Endothelial cell of umbilical vein (primary cell): ENCODE measurements at regions of chr9 and their contacts with region 1.

Region 1: GRCh38 chr9:95317119-95317892 is at the start of gene FANCC:
- DNase-seq: peak; percentile 89
- H3K4me3 ChIP-seq: peak within 1 kb of the TSS; percentile 76 to 96 (median 88)
- H3K27ac ChIP-seq: peak within 1 kb of the TSS; percentile 98
- H3K4me1 ChIP-seq: peaks cover 14% of the 10 kb centered on the region
- H3K27me3 ChIP-seq: peaks cover 0 to 5% of the 10 kb centered on the region in 2 experiments
- CTCF ChIP-seq: no peak
- POLR2A ChIP-seq: peak; percentile 72
- total RNA-seq, gene FANCC: 13.1 and 14.0 TPM in 2 replicates

Region 2: DNA sequence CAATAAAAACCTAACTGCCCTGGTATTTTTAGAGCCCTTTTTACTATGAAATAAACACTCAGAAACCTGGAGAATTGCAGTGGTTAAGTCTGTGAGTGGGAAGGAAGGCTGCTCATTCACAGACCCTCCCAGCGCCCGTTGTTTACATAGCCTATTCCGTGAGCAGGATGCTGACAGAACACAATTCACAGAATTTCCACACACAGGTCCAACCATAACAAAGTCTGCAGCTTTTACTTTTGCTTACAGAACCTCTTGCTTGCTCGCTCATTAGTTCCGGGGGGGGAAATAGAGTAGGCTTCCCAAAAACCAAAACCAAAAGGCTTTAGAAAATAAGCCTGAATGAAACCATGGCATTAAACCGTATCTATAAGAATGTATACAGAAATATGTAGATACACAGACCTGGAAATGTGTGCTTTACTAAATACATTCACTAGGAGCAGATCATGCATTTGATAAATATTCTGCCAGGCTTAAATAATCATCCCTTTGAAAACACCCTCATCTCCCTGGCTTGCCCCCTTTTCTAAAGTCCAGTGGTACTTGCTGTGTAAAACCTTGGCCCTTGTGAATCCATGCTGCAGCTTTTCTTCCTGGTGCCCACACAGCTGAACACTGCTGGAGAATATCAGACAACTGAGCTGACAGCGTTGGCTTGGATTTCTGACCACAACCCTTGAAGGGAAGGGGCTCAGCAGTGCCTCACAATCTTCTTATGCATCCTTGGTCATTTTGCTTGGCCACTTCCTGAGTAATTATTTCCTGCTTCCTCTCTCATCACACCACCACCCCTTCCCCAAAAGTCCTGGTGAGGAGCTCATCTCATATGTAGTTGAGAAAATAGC is 127.8 kb before region 1 on chr9:
- CTCF ChIA-PET with region 1: no interaction called
- POLR2A ChIA-PET with region 1: no interaction called
- dilution Hi-C with region 1: no loop called
- intact Hi-C with region 1: loop called (anchors 1 kb)
- DNase-seq: peak; percentile 95
- H3K4me3 ChIP-seq: peak overlapping the region in 2 of 3 experiments; percentile 24 to 41
- H3K27ac ChIP-seq: peak overlapping the region; percentile 89
- H3K4me1 ChIP-seq: peaks cover 25% of the 10 kb centered on the region
- H3K27me3 ChIP-seq: no peaks in the 10 kb centered on the region
- CTCF ChIP-seq: no peak
- POLR2A ChIP-seq: no peak

Region 3: DNA sequence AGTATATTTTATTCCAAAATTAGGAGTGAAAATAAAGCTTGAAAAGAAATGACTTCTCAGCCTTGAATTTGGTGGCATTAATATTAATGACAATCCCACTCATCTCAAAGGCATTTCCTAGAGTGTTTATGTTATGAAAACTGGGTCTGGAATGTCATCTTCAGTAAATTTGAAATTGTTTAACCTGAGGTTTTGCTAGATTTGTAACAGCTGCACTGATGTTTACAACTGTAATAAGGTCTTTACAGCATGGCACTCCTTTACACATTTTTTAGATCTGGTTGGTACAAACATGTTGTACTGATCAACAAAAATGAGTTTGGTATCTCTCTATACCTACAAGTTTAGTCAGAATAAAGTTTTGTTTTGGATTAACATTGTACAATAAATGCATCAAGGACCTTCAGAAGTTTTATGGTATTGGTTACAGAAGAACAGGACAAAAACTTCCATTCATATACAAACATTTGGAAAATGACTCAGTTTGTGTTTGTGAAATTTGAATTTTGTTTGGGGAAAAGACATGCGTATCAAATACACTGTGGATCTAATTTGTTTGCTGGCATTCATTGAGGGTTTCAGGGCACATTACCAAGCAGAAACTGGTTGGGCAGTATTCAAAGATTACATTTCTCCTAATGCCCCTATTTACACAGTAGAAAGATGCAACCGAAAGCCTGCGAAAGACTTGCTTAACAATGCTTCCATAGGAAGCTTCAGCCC is 11.4 kb before region 1 on chr9:
- CTCF ChIA-PET with region 1: no interaction called
- POLR2A ChIA-PET with region 1: no interaction called
- dilution Hi-C with region 1: no loop called
- intact Hi-C with region 1: loop called (anchors 1 kb)
- DNase-seq: peak; percentile 35
- H3K4me3 ChIP-seq: no peak overlapping the region
- H3K27ac ChIP-seq: peak overlapping the region; percentile 10
- H3K4me1 ChIP-seq: peaks cover 26% of the 10 kb centered on the region
- H3K27me3 ChIP-seq: no peaks in the 10 kb centered on the region
- CTCF ChIP-seq: no peak
- POLR2A ChIP-seq: no peak

Region 4: DNA sequence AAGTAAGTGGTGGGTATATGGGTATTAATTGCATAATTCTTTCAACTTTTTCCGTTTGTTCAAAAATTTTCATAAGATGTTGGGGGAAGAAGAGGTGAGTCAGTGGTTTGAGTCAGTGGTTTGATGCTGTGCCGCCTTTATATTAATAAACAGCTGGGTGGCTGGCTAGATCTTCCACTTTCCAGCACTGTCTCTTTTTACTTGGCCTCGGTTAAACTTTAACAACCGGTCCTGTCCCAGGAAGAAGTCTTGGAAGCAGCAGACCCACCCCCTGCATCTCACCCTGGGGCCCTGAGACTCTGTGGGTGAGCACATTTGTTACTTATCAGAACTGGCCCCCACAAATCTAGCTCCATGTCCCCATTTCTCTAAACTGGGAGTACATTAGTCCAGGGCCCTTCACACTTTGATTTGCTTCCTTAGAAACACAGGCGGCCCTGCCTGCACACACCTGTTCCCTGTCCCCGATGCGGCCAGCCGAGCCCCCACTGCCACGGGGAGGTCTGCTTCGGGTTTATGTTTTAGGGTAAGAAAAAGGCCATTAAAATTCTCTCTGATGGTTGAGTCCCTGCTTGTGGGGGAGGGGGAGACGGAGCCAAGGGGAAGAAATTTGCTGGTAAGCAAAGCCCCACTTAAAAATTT is 108.7 kb after region 1 on chr9:
- CTCF ChIA-PET with region 1: no interaction called
- POLR2A ChIA-PET with region 1: no interaction called
- dilution Hi-C with region 1: no loop called
- intact Hi-C with region 1: no loop called
- DNase-seq: no peak
- H3K4me3 ChIP-seq: peak overlapping the region in 1 of 3 experiments; percentile 30
- H3K27ac ChIP-seq: no peak overlapping the region
- H3K4me1 ChIP-seq: peaks cover 9% of the 10 kb centered on the region
- H3K27me3 ChIP-seq: no peaks in the 10 kb centered on the region
- CTCF ChIP-seq: no peak
- POLR2A ChIP-seq: no peak

Region 5: DNA sequence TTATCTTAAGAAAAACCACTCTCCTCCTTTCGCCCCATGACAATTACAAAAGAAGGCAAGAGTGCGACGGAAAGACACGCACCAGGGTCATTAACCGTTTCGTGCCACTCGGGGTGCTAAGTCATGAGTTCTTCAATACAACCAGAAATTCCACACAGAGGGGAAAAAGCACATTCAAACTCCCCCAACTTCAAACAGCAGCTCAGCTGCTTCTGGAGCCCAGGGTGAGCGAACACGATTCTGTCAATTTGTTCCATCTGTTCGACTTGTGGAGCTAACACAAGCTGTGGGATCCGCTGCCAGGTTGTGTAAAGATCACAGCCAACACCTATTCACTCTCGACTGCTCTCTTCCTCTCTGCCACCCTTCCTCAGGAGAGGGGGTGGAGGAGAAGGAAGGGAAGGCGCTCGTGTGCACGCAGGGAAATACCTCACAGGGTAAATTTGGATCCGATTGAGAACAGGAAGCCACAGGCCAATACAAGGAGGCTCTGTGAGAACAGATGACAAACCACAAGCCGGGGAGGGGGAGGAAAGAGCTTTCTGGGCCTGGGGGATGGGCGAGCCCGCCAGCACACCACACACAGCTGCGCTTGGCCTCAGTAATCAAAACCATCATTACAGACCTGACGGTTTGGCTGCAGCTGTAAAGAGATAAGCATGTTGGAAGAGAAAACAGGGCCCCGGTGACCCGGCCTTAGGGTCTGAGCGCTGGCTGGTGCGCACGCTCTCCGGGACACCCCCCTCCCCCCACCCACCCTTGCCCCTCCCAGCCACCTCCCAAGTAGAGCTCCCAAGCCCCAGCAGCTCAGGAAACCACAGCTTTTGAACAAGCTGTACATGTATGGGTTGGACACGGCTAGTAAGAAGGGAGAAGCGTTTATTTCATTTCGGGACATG is 145.2 kb after region 1 on chr9:
- CTCF ChIA-PET with region 1: no interaction called
- POLR2A ChIA-PET with region 1: no interaction called
- dilution Hi-C with region 1: no loop called
- intact Hi-C with region 1: loop called (anchors 1 kb)
- DNase-seq: peak; percentile 82
- H3K4me3 ChIP-seq: peak overlapping the region in 2 of 3 experiments; percentile 5 to 23
- H3K27ac ChIP-seq: peak overlapping the region; percentile 39
- H3K4me1 ChIP-seq: peaks cover 9% of the 10 kb centered on the region
- H3K27me3 ChIP-seq: no peaks in the 10 kb centered on the region
- CTCF ChIP-seq: no peak
- POLR2A ChIP-seq: no peak

Region 6: GRCh38 chr9:95574176-95574575 is 256.9 kb after region 1 on chr9:
- CTCF ChIA-PET with region 1: no interaction called
- POLR2A ChIA-PET with region 1: no interaction called
- dilution Hi-C with region 1: no loop called
- intact Hi-C with region 1: loop called (anchors 1 kb)
- DNase-seq: no peak
- H3K4me3 ChIP-seq: no peak overlapping the region
- H3K27ac ChIP-seq: no peak overlapping the region
- H3K4me1 ChIP-seq: peaks cover 14% of the 10 kb centered on the region
- H3K27me3 ChIP-seq: peaks cover 2 to 5% of the 10 kb centered on the region in 2 experiments
- CTCF ChIP-seq: no peak
- POLR2A ChIP-seq: no peak

Region 7: DNA sequence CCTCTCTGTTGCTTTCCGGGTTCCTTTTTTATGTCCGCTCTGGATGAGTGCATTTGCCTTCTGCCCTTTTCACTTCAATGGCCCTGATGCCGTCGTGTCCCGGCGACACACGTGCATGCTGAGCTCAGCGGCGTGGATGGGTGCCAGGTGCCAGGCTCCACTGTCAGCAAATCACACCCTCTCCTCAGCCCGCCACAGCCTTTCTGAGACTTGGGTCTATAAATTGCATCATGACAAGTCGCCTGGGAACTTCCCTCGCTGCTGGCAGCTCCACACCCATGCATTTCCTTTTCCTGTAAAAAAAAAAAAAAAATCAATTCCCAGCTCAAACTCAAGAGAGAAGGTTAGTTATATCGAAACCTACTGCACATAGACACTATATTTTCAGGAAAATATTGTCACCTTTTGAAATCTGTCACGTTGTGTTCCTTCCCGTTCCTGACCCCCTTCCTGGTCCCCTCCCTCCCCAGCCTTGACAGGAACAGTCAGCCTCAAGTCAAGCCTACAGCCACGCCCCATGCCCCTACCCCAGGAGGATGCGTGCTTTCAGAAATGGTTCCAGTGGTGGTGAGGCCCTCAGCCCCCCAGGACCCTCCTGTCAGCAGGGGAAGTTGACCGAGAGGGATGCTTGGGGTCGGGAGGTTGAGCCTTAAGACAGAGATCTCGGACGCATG is 309.7 kb after region 1 on chr9:
- CTCF ChIA-PET with region 1: no interaction called
- POLR2A ChIA-PET with region 1: no interaction called
- dilution Hi-C with region 1: no loop called
- intact Hi-C with region 1: loop called (anchors 5 kb)
- DNase-seq: peak; percentile 71
- H3K4me3 ChIP-seq: peak overlapping the region in 1 of 3 experiments; percentile 18
- H3K27ac ChIP-seq: peak overlapping the region; percentile 82
- H3K4me1 ChIP-seq: peaks cover 23% of the 10 kb centered on the region
- H3K27me3 ChIP-seq: no peaks in the 10 kb centered on the region
- CTCF ChIP-seq: no peak
- POLR2A ChIP-seq: no peak

Region 8: DNA sequence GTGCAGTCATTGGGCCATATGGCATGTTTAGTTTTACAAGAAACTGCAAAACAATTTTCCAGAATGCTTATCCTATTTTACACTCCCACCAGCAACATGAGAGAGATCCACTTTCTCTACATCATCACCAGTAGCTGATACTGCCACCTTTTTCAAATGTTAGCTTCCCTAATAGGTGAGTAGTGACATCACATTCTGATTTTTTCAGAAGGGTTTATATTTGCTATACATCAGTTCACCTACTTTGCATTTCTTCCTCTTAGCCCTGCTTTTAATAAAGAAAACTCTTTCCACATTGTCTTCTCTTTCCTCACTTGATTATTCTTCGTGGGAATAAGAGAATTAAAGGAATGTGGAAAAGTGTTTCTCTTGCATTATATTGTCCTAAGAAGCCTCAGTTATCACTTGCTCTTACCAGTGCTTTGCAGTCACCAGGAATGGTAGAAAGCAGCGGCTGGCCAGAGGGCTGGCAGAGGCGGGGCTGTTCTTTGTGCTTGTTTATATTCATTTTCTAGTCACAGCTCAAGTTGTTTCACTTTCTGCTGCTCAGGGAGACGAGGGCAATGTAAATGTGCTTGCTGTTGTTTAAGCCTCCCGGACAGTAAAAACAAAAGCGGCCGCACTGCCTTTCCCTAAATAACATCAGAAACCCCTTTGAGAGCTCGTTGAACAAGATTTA is 819.8 kb after region 1 on chr9:
- CTCF ChIA-PET with region 1: no interaction called
- POLR2A ChIA-PET with region 1: no interaction called
- dilution Hi-C with region 1: no loop called
- intact Hi-C with region 1: loop called (anchors 10 kb)
- DNase-seq: peak; percentile 56
- H3K4me3 ChIP-seq: no peak overlapping the region
- H3K27ac ChIP-seq: no peak overlapping the region
- H3K4me1 ChIP-seq: peaks cover 17% of the 10 kb centered on the region
- H3K27me3 ChIP-seq: peaks cover 0 to 2% of the 10 kb centered on the region in 2 experiments
- CTCF ChIP-seq: no peak
- POLR2A ChIP-seq: no peak